ENCODE measurements at regions of chrX and their contacts with region 1.

Region 1: DNA sequence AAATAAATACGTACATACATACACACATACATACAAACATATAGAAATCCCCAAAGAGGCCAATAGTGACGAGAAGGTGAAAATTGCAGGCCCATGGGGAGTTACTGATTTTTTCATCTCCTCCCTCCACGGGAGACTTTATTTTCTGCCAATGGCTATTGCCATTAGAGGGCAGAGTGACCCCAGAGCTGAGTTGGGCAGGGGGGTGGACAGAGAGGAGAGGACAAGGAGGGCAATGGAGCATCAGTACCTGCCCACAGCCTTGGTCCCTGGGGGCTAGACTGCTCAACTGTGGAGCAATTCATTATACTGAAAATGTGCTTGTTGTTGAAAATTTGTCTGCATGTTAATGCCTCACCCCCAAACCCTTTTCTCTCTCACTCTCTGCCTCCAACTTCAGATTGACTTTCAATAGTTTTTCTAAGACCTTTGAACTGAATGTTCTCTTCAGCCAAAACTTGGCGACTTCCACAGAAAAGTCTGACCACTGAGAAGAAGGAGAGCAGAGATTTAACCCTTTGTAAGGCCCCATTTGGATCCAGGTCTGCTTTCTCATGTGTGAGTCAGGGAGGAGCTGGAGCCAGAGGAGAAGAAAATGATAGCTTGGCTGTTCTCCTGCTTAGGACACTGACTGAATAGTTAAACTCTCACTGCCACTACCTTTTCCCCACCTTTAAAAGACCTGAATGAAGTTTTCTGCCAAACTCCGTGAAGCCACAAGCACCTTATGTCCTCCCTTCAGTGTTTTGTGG is 180.7 kb downstream of the AR start:
- DNase-seq: peak in 1 of 2 donors; percentile 55
- ATAC-seq: peak; percentile 65 to 79 (median 76)
- H3K4me3 ChIP-seq: no peak overlapping the region
- H3K27ac ChIP-seq: no peak overlapping the region
- H3K4me1 ChIP-seq: peaks cover 12% of the 10 kb centered on the region
- H3K27me3 ChIP-seq: peaks cover 0 to 3% (median 0%) of the 10 kb centered on the region in 3 donors
- CTCF ChIP-seq: peak; percentile 15

Region 2: DNA sequence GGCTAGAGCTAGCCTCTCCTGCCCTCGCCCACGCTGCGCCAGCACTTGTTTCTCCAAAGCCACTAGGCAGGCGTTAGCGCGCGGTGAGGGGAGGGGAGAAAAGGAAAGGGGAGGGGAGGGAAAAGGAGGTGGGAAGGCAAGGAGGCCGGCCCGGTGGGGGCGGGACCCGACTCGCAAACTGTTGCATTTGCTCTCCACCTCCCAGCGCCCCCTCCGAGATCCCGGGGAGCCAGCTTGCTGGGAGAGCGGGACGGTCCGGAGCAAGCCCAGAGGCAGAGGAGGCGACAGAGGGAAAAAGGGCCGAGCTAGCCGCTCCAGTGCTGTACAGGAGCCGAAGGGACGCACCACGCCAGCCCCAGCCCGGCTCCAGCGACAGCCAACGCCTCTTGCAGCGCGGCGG is 180.7 kb before region 1 on chrX and contains the start of gene AR:
- intact Hi-C with region 1: loop called in 1 of 2 experiments (anchors 5 kb)
- DNase-seq: peak; percentile 74 to 81
- ATAC-seq: peak; percentile 59 to 73 (median 68)
- H3K4me3 ChIP-seq: peak within 1 kb of the TSS; percentile 69
- H3K27ac ChIP-seq: peak within 1 kb of the TSS; percentile 69
- H3K4me1 ChIP-seq: no peaks in the 10 kb centered on the region
- H3K27me3 ChIP-seq: peaks cover 0 to 4% (median 0%) of the 10 kb centered on the region in 3 donors
- CTCF ChIP-seq: no peak
- total RNA-seq, gene AR: 7.3 to 16.0 (median 11.3) TPM

Region 3: DNA sequence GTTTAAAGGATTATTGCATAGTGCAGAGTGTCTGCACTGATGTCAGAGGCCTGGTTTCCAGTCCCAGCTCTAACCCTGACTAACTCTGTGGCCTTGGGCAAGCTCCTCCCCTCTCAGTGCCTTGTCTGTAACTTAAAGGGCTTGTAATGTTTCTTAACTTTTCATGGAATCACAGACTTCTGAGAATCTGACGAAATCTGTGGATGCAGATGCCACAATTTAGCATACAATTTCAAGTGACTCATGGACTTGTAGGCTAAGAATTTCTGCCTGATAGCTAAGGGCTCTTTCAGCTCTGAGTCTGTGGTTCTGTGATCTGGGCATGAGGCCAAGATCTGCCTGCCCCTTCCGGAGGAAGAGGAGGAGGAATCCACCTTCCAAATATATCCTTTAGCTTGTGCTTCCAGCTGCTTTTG is 56.2 kb after region 1 on chrX:
- intact Hi-C with region 1: loop called (anchors 5 kb)
- DNase-seq: peak; percentile 74 to 86
- ATAC-seq: peak; percentile 77 to 87 (median 82)
- H3K4me3 ChIP-seq: peak overlapping the region; percentile 31
- H3K27ac ChIP-seq: peak overlapping the region; percentile 77
- H3K4me1 ChIP-seq: peaks cover 24% of the 10 kb centered on the region
- H3K27me3 ChIP-seq: no peaks in the 10 kb centered on the region
- CTCF ChIP-seq: no peak

Region 4: DNA sequence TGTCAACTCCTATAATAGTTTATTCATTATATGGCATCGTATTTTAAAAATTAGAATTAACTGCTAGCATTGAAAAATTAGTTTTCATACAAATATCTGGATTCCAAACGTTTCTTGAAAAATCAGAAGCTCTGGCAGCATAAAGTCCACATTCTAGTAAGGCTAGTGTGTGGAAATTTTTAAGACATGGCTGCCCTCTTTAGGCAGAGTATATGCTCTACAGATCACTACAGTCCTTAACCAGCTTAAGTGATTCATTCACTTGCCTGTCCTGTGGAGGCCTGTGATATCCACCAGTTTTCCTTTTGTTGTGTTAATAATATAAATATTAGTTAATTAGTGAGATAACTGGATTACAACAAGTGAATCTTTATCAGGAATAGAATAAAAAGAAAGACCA is 421.5 kb after region 1 on chrX:
- intact Hi-C with region 1: loop called in 1 of 2 experiments (anchors 10 kb)
- DNase-seq: no peak
- ATAC-seq: peak in 2 of 4 donors; percentile 62 to 69
- H3K4me3 ChIP-seq: no peak overlapping the region
- H3K27ac ChIP-seq: no peak overlapping the region
- H3K4me1 ChIP-seq: no peaks in the 10 kb centered on the region
- H3K27me3 ChIP-seq: peaks cover 0 to 7% (median 0%) of the 10 kb centered on the region in 3 donors
- CTCF ChIP-seq: peak; percentile 35

Measured in psoas muscle (tissue), 8 donors.